ENCODE measurements at regions of chr9 and their contacts with region 1.

Region 1: GRCh38 chr9:92716557-92716956 is 46.6 kb upstream of the IPPK start:
- DNase-seq: peak; percentile 87
- H3K27ac ChIP-seq: peak overlapping the region; percentile 99
- CTCF ChIP-seq: peak; percentile 98

Region 2: GRCh38 chr9:92576175-92576574 is 140.4 kb before region 1 on chr9:
- CTCF ChIA-PET with region 1: no interaction called
- POLR2A ChIA-PET with region 1: no interaction called
- DNase-seq: no peak
- H3K27ac ChIP-seq: no peak overlapping the region
- CTCF ChIP-seq: no peak

Region 3: DNA sequence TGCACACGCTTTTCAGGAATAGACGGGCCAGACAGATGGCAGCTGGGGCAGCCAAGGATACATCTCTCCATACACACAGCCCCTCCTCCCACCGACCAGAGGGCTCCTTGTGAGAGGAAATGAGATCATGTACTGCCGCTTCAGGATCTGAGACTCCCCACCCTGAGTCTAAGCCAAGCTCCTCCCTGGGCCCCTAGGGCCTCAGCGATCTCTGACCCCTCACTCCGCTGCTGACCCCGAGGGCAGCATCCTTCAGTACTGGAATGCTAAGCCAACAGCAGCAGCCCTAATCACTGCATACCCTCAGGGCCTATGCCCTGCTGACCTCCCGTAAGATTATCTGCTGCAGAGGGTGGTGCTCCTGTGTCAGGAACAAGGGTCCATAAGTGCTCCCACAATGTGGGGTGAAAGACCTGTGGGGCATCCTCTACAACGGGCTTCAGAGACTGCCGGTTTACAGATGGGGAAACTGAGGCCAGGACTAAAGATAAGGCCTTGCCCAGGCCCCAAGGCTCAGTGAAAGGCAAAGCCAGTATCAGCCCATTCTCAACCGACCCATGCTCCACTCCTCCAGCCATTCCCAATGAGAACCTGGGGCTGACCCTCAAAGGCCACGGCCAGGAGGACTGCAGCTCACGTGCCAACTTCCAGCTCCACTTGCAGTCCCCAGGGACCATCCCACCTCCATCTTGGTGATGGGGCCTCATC is 10.6 kb after region 1 on chr9:
- CTCF ChIA-PET with region 1: no interaction called
- POLR2A ChIA-PET with region 1: no interaction called
- DNase-seq: no peak
- H3K27ac ChIP-seq: peak overlapping the region; percentile 89
- CTCF ChIP-seq: no peak

Region 4: GRCh38 chr9:92764988-92765936 is 48.7 kb after region 1 on chr9:
- CTCF ChIA-PET with region 1: interaction called, 14 read pairs
- POLR2A ChIA-PET with region 1: interaction called, 7 read pairs
- DNase-seq: peak; percentile 100
- H3K27ac ChIP-seq: peak overlapping the region; percentile 98
- CTCF ChIP-seq: peak; percentile 100

Region 5: DNA sequence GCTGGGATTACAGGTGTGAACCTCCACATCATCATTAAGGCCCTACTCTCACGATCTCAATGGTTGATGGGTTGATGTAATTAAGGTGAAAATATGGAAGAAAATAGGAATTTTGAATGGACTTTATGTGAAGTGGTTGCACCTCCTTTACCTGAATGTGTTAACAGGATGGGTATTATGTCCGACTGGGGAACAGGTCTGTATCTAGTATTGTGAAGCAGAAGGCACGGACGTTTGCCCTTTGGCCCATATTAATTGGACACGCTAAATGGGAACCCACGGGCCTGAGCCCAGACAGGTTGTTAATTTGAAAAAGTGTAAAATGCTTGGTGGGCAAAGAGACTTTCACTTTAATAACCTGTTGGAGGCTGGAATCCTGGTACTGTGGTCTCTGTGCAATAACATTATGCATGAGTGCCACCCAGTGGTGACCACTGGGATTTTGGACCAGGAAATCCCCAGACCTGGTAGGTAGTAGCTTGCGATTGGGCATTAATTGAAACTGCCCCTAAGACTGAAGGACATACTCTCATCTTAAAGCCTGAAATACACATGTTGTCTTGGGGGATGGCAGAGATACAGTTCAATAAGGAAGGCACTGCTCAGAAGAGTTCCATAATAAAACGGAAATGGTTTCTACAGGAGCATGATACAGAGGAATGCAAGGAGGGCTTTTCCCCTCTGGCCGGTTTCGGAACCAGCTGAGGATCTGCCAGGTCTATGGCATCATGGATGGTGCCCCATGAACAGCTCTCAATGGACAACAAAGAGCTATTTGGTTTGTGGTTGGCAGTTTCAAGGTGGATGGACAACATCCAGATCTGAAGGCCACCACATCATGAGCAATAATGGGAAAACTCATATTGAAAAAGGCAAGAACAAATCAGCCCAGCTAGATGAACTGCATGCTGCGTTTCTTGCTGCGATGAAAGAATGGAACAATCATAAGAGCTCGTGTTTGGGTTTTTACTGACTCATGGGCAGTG is 74.3 kb after region 1 on chr9:
- CTCF ChIA-PET with region 1: interaction called, 53 read pairs
- POLR2A ChIA-PET with region 1: no interaction called
- DNase-seq: peak; percentile 92
- H3K27ac ChIP-seq: no peak overlapping the region
- CTCF ChIP-seq: peak; percentile 96